ENCODE measurements at regions of chr7 and their contacts with region 1.

Region 1: GRCh38 chr7:47266131-47266706 is 315.7 kb downstream of the TNS3 start:
- DNase-seq: peak; percentile 63 to 82 (median 71)
- H3K4me3 ChIP-seq: no peak overlapping the region
- H3K27ac ChIP-seq: no peak overlapping the region
- H3K4me1 ChIP-seq: peaks cover 5% of the 10 kb centered on the region
- H3K27me3 ChIP-seq: no peaks in the 10 kb centered on the region
- CTCF ChIP-seq: peak; percentile 92 to 95 (median 93)
- EP300 ChIP-seq: no peak
- POLR2A ChIP-seq: peak; percentile 15

Region 2: GRCh38 chr7:47195641-47196040 is 70.6 kb before region 1 on chr7:
- intact Hi-C with region 1: no loop called
- DNase-seq: no peak
- H3K4me3 ChIP-seq: no peak overlapping the region
- H3K27ac ChIP-seq: no peak overlapping the region
- H3K4me1 ChIP-seq: no peaks in the 10 kb centered on the region
- H3K27me3 ChIP-seq: no peaks in the 10 kb centered on the region
- CTCF ChIP-seq: no peak
- EP300 ChIP-seq: no peak
- POLR2A ChIP-seq: no peak

Region 3: GRCh38 chr7:47327698-47328391 is 61.6 kb after region 1 on chr7:
- intact Hi-C with region 1: loop called in 1 of 4 experiments (anchors 5 kb)
- DNase-seq: peak; percentile 85 to 92 (median 87)
- H3K4me3 ChIP-seq: peak overlapping the region; percentile 0
- H3K27ac ChIP-seq: peak overlapping the region; percentile 60 to 81
- H3K4me1 ChIP-seq: peaks cover 23% of the 10 kb centered on the region
- H3K27me3 ChIP-seq: no peaks in the 10 kb centered on the region
- CTCF ChIP-seq: no peak
- EP300 ChIP-seq: no peak
- POLR2A ChIP-seq: no peak

Region 4: DNA sequence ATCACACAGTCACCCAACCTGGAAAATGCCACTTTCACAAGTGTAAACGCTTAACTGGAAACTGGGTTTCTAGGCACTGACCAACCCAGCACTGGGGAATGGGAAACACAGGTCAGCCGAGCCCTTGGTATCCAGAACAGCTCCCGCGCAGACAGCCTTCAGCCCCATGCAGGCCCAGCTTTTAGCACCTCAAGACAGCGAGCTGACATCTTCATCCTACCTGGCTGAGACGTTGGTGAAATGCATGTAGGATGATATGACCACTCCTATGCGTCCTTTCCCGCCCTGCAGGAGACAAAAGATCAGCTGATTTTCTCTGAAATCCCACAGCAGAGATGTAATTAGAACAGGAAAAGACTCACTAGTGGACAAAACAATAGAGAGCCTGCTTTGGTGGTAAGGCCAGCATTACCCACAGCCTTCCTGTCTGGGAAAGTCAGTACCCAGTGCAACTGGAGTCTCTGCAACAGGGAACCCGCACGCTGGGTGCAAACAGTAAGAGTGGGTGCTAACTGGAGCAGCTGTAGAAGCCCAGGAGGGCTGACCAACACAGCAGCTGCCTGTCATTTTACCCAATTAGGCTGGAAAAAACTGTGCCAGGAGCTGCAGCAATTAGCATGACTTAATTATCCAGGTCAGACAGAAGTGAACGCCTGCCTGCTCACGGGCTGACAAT is 162.0 kb after region 1 on chr7:
- intact Hi-C with region 1: loop called in 2 of 4 experiments (anchors 10 kb)
- DNase-seq: no peak
- H3K4me3 ChIP-seq: no peak overlapping the region
- H3K27ac ChIP-seq: no peak overlapping the region
- H3K4me1 ChIP-seq: peaks cover 9% of the 10 kb centered on the region
- H3K27me3 ChIP-seq: no peaks in the 10 kb centered on the region
- CTCF ChIP-seq: no peak
- EP300 ChIP-seq: no peak
- POLR2A ChIP-seq: no peak

Region 5: GRCh38 chr7:47435889-47436312 is 169.7 kb after region 1 on chr7:
- intact Hi-C with region 1: loop called in 2 of 4 experiments (anchors 5 to 10 kb)
- DNase-seq: peak; percentile 73 to 84 (median 78)
- H3K4me3 ChIP-seq: no peak overlapping the region
- H3K27ac ChIP-seq: no peak overlapping the region
- H3K4me1 ChIP-seq: peaks cover 9% of the 10 kb centered on the region
- H3K27me3 ChIP-seq: no peaks in the 10 kb centered on the region
- CTCF ChIP-seq: peak; percentile 45 to 72 (median 64)
- EP300 ChIP-seq: no peak
- POLR2A ChIP-seq: no peak

Region 6: GRCh38 chr7:47818796-47819606 is 552.8 kb after region 1 on chr7:
- intact Hi-C with region 1: loop called in 3 of 4 experiments (anchors 5 kb)
- DNase-seq: peak; percentile 76 to 87 (median 82)
- H3K4me3 ChIP-seq: no peak overlapping the region
- H3K27ac ChIP-seq: no peak overlapping the region
- H3K4me1 ChIP-seq: peaks cover 2% of the 10 kb centered on the region
- H3K27me3 ChIP-seq: no peaks in the 10 kb centered on the region
- CTCF ChIP-seq: peak; percentile 58 to 94 (median 91)
- EP300 ChIP-seq: no peak
- POLR2A ChIP-seq: no peak

Measured in ovary (tissue), 10 donors.